Activated T-helper 2 cell treated with anti-CD3 and anti-CD28 coated beads, Interferon-gamma antibody, Interleukin-2, Interleukin-4, amounts not matched to agents 10 μg/mL and 5 μg/mL and 100 μg/mL, durations not matched to agents 14 hours and 24 hours and 36 hours (primary cell): ENCODE measurements at regions of chr12 and their contacts with region 1.

Region 1: GRCh38 chr12:132414634-132415326 is 75.2 kb upstream of the FBRSL1 start:
- DNase-seq: peak; percentile 66
- H3K4me3 Mint-ChIP-seq: no peak overlapping the region
- H3K27ac Mint-ChIP-seq: no peak overlapping the region
- H3K4me1 Mint-ChIP-seq: no peaks in the 10 kb centered on the region
- H3K27me3 Mint-ChIP-seq: peaks cover 3% of the 10 kb centered on the region

Region 2: DNA sequence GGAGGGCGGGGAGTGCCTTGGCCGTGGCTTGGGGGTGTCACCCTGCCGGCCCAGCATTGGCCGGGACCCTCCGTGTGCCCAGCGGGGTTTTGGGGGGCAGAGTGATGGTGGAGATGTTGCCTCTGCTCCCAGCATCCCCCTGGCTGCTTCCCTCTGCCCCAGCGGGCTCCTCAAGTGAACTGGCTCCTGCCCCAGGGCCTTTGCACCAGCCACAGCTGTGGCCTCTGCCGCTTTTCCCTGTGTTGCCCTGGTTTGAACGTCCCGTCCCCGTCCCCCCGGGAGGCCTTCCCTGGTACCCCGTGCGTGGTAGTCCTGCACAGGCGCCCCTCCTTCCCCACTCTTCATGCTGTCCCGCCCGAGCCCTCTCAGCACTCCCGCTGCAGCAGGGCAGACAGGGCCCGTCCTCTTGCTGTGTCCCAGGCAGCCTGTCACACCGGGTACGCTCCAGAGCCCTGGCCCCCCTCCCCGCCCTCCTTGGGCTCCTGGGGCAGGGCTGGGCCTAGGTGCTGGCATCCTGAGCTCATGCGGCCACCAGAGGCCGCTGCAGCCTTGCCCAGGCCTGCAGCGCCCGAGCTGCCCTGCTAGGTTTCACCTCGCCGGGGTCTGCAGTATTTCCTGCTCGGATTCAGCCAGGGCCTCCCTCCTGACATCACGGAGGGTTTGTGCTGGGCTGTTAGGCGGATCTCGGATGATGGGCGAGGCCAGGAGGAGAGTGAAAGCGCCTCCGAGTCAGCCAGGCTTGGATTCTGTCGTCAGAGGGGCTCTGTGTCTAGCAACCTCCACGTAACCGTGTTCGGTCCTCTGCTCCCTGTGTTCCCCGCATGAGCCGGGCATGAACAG is 261.1 kb before region 1 on chr12:
- intact Hi-C with region 1: loop called (anchors 2 kb)
- DNase-seq: peak; percentile 64
- H3K4me3 Mint-ChIP-seq: no peak overlapping the region
- H3K27ac Mint-ChIP-seq: no peak overlapping the region
- H3K4me1 Mint-ChIP-seq: no peaks in the 10 kb centered on the region
- H3K27me3 Mint-ChIP-seq: no peaks in the 10 kb centered on the region

Region 3: GRCh38 chr12:132523576-132524331 is 109.0 kb after region 1 on chr12:
- intact Hi-C with region 1: loop called (anchors 1 kb)
- DNase-seq: peak; percentile 56
- H3K4me3 Mint-ChIP-seq: no peak overlapping the region
- H3K27ac Mint-ChIP-seq: no peak overlapping the region
- H3K4me1 Mint-ChIP-seq: no peaks in the 10 kb centered on the region
- H3K27me3 Mint-ChIP-seq: no peaks in the 10 kb centered on the region

Region 4: GRCh38 chr12:132560614-132561426 is 146.0 kb after region 1 on chr12:
- intact Hi-C with region 1: loop called (anchors 1 kb)
- DNase-seq: peak; percentile 60
- H3K4me3 Mint-ChIP-seq: peak overlapping the region; percentile 71
- H3K27ac Mint-ChIP-seq: no peak overlapping the region
- H3K4me1 Mint-ChIP-seq: peaks cover 8% of the 10 kb centered on the region
- H3K27me3 Mint-ChIP-seq: peaks cover 6% of the 10 kb centered on the region

Region 5: GRCh38 chr12:132614861-132615578 is 200.2 kb after region 1 on chr12:
- intact Hi-C with region 1: loop called (anchors 1 kb)
- DNase-seq: peak; percentile 67
- H3K4me3 Mint-ChIP-seq: no peak overlapping the region
- H3K27ac Mint-ChIP-seq: no peak overlapping the region
- H3K4me1 Mint-ChIP-seq: peaks cover 3% of the 10 kb centered on the region
- H3K27me3 Mint-ChIP-seq: peaks cover 27% of the 10 kb centered on the region